ENCODE measurements at regions of chr5 and their contacts with region 1.

Region 1: DNA sequence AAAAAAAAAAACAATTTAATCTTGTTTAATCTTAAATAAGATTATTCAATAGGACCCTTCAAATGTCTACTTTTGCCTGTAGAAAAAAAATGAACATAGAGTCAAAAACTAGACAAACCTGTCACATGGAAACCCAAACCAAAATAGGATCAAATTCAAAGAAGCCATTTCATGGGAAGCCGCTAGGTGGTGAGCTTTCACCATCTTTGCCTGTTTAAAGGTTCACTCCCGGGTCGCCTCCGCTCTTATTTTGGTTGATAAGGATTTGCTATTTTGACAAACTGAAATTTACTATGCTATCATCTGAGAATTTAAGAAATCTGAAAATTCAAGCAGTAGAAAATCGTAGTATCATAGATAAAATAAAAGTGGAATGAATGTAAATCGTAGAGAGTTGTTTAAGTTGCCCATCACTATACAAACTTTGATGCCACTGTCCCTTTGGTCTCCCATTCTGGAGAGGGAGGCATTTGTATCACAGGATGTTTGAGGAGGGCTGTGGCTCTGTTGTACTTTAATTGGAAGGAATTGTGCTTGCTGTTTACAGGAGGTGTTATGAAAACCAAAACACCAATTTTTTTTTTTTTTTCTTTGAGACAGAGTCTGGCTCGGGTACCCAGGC is 43.5 kb upstream of the DNAH5 start:
- DNase-seq: peak in 2 of 6 donors; percentile 26 to 61
- ATAC-seq: peak; percentile 76 to 91 (median 88)
- H3K4me3 ChIP-seq: no peak overlapping the region
- H3K27ac ChIP-seq: no peak overlapping the region
- H3K4me1 ChIP-seq: no peaks in the 10 kb centered on the region
- H3K27me3 ChIP-seq: no peaks in the 10 kb centered on the region
- CTCF ChIP-seq: peak; percentile 51 to 71 (median 64)

Region 2: GRCh38 chr5:14644623-14645237 is 656.8 kb after region 1 on chr5:
- intact Hi-C with region 1: loop called in 1 of 3 experiments (anchors 10 kb)
- DNase-seq: no peak
- ATAC-seq: no peak
- H3K4me3 ChIP-seq: no peak overlapping the region
- H3K27ac ChIP-seq: no peak overlapping the region
- H3K4me1 ChIP-seq: no peaks in the 10 kb centered on the region
- H3K27me3 ChIP-seq: no peaks in the 10 kb centered on the region
- CTCF ChIP-seq: no peak

Measured in pancreas (tissue), 10 donors.